Right ventricle myocardium inferior (tissue), 1 donor: ENCODE measurements at regions of chr2 and their contacts with region 1.

Region 1: DNA sequence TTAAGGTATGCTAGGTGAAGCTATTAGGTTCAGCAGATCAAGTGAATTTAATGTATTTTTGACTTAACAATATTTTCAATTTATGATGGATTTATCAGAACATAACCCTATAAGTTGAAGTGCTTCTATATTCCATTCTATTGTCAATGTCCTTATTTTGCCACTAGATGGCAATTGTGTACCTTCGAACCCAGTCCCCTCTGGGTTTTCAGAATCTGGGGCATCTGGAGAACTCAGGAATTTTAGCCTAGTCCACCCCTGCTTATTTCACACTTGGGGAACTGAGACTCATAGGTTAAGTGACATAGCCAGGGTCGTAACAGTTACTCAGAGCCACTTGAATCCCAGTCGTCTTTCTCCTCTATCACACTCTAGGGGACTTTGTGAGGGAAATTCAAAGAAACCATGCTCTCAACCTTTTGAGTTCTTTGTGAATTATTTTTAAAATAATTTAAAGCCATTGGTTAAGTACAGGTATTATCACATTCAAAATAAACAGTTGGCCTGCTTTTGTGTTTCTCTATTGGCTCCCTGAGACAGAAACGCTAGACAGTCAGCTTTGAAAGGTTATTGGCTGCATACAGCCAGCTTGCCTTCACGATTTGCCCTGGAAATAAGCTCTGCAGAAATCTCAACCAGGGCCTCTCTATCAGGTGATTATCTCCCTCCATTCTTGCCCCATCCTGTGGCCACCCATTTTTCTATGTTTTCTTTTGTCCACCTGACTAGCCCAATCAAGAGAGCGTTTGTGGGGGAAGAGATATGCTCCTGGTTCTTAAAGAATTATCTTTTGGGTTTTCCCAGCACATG is 145.0 kb downstream of the TTC27 start:
- DNase-seq: no peak
- ATAC-seq: peak; percentile 73

Region 2: GRCh38 chr2:32095671-32096070 is 677.2 kb before region 1 on chr2:
- intact Hi-C with region 1: no loop called
- DNase-seq: no peak
- ATAC-seq: no peak

Region 3: DNA sequence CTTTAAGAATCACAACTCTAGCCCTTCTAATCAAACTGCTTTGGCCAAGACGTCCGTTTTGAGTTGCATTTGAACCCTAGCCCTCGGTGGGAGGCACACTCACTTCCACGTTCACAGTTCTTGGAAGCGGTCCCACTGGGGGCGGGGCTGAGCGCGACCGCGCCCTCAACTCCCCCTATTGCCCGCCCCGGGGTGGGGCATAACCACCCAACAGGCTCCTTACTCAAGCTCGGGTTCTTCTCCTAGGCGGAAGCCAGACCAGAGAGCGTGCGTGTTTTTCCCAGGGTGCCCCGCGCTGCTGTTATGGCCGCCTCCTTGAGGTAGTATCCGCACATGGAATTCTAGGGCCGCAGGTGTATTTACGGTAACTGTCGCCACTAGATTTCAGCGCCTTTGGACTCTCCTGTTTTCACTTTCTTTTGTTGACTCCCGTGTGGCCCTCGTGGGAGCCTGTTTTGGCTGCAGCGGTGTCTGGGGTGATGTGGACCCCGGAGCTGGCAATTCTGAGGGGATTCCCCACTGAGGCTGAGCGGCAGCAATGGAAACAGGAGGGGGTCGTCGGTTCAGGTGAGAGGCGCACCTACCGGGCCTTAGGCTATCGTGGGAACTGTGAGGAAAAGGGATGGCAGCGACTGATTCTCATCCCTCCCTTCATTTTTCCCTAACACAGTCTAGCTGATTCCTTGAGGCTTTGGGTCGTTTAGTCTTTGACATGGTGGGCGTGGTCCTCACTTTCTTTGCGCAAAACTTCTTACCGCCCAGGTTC is 144.8 kb before region 1 on chr2 and contains the start of gene TTC27:
- intact Hi-C with region 1: loop called (anchors 10 kb)
- DNase-seq: peak; percentile 97
- ATAC-seq: peak; percentile 99
- total RNA-seq, gene TTC27: 8.1 TPM

Region 4: GRCh38 chr2:33033606-33034081 is 260.8 kb after region 1 on chr2:
- intact Hi-C with region 1: loop called (anchors 1 kb)
- DNase-seq: no peak
- ATAC-seq: peak; percentile 72

Region 5: GRCh38 chr2:33272001-33272400 is 499.2 kb after region 1 on chr2:
- intact Hi-C with region 1: loop called (anchors 5 kb)
- DNase-seq: no peak
- ATAC-seq: no peak

Region 6: DNA sequence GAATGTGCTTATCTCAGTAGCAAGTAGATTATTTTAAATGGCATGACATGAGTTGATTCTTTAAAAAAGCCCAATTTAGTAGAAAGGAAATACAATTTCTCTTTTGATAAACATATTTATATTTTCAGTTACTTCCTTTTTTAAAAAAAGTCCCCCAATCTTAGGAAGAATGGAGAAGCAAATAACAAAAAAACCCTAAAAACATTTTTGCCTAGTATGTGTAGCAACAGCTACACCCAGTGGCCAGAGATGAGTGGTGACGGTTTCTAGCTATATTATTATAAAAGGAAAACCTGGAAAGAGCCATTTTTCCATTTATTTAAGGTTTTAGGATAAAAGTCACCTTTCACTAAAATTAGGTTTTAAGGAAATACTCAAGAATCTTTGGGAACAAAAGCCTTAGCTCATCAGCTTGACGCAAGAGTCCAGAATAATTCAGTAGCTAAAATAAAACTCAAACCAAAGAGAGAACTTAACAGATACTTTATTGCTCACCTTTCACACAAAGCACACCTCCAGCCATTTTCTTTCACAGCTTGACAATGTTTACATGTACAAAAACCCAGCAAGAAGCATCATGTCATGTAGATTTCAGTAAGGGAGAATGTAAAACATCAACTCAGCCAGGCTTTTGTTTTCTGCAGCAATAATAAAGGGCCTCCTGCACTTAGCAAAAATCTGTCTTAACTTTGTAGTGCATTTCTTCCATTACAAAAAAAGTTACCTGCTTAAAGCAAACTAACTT is 810.5 kb after region 1 on chr2:
- intact Hi-C with region 1: loop called (anchors 5 kb)
- DNase-seq: no peak
- ATAC-seq: no peak